ENCODE measurements at regions of chr2 and their contacts with region 1.

Region 1: GRCh38 chr2:171136024-171136423 is 24.7 kb downstream of the TLK1 start:
- DNase-seq: no peak
- H3K4me3 Mint-ChIP-seq: no peak overlapping the region
- H3K27ac Mint-ChIP-seq: peak overlapping the region; percentile 84
- H3K4me1 Mint-ChIP-seq: peaks cover 20% of the 10 kb centered on the region
- H3K27me3 Mint-ChIP-seq: no peaks in the 10 kb centered on the region

Region 2: GRCh38 chr2:171095014-171095582 is 40.9 kb before region 1 on chr2:
- intact Hi-C with region 1: loop called (anchors 1 kb)
- DNase-seq: no peak
- H3K4me3 Mint-ChIP-seq: no peak overlapping the region
- H3K27ac Mint-ChIP-seq: peak overlapping the region; percentile 72
- H3K4me1 Mint-ChIP-seq: peaks cover 32% of the 10 kb centered on the region
- H3K27me3 Mint-ChIP-seq: no peaks in the 10 kb centered on the region

Region 3: DNA sequence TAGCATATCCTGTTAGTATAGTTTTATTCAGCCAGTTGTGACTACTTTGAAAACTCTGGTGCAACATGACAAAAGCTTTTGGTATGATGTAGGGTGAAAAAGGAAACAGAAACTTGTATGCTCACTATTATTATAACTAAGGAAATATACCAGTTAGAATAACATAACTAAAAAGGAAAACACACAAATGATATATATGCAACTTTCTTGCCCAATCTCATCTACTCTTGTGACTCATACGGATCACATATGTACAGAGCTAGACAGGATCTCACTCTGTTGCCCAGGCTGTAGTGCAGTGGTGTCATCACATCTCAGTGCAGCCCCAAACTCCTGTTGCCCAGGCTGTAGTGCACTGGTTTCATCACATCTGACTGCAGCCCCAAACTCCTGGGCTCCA is 37.1 kb after region 1 on chr2:
- intact Hi-C with region 1: loop called (anchors 1 kb)
- DNase-seq: no peak
- H3K4me3 Mint-ChIP-seq: no peak overlapping the region
- H3K27ac Mint-ChIP-seq: no peak overlapping the region
- H3K4me1 Mint-ChIP-seq: peaks cover 25% of the 10 kb centered on the region
- H3K27me3 Mint-ChIP-seq: peaks cover 6% of the 10 kb centered on the region